ENCODE measurements at regions of chr15 and their contacts with region 1.

Region 1: DNA sequence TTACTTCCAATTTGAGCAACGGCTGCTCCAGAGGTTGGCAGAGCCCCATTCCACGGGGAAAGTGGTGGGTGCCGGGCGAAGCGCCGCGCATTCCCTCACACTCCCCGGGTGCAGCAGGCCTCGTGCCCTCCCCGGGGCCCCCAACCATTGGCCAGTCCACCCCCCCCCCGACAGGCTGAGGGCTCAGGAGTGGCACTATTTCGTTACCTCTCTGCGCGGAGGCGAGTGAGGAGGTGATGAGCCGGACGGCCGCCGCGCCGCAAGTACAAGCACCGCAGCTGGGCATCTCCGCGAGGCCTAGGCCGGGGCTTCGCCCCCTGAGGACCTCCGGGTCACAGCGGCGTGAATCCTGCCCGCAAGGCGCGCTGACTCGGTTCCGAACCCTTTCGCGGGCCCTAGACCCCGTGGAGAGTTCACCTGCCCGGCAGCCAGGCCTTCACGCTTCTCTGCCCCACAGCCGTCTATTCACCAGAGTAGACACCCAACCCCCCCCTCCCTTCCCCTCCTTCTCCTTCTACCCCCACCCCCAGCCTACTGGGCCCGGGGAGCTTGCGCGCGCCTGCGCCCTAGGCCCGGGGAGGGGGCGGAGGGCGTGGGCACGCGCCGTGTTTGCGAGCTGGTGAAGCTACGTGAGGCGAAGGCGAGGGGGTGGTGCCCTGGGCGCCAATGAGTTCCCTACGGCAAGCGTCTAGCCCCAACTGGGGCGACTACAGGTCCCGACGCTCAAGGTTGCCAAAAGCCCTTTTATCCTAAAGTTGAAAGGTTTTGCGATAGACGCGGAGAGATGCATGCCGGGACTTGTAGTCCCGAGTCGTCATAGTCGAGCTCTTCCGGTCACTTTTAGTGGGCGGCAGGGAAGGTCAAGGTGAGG is at the start of gene CLPX:
- DNase-seq: peak; percentile 87 to 92
- H3K4me3 ChIP-seq: peak within 1 kb of the TSS; percentile 80 to 98
- H3K27ac ChIP-seq: peak within 1 kb of the TSS; percentile 93 to 95
- H3K4me1 ChIP-seq: no peaks in the 10 kb centered on the region
- H3K27me3 ChIP-seq: no peaks in the 10 kb centered on the region
- CTCF ChIP-seq: no peak
- POLR2A ChIP-seq: peak; percentile 45 to 70
- total RNA-seq, gene CLPX: 21.0 to 85.2 (median 51.8) TPM

Region 2: GRCh38 chr15:65275728-65276126 is 90.6 kb after region 1 on chr15:
- intact Hi-C with region 1: loop called (anchors 5 kb)
- DNase-seq: no peak
- H3K4me3 ChIP-seq: no peak overlapping the region
- H3K27ac ChIP-seq: no peak overlapping the region
- H3K4me1 ChIP-seq: peaks cover 0 to 1% of the 10 kb centered on the region in 2 donors
- H3K27me3 ChIP-seq: no peaks in the 10 kb centered on the region
- CTCF ChIP-seq: no peak
- POLR2A ChIP-seq: no peak

Measured in uterus (tissue), 4 donors.